ENCODE measurements at regions of chr11 and their contacts with region 1.

Region 1: DNA sequence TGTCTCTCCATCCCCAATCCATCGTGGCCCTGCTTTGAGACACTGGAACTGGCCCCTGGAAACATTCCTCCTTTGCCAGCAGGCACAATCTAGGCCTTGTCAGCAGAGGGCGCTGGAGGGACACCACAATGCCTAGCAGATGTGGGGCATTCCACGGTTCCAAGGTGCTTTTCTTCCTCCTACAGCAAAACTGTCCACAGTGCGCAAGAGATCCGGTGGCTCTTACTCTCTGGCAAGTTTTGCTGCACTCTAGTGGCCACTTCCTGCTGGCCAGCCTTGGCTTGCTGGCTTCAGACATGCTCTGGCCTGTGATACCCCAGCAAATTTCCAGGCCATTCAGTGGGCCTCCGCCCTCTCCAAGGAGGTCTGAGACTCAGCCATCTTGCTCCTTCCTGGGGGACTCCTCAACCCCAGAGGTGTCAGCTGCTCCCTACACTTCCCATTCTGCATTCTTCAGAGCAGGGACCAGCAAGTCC is 17.1 kb upstream of the RBM4B start:
- DNase-seq: peak; percentile 76 to 86 (median 79)
- H3K4me3 ChIP-seq: no peak overlapping the region
- H3K4me3 Mint-ChIP-seq: no peak overlapping the region
- H3K27ac ChIP-seq: no peak overlapping the region
- H3K27ac Mint-ChIP-seq: no peak overlapping the region
- H3K4me1 ChIP-seq: no peaks in the 10 kb centered on the region
- H3K4me1 Mint-ChIP-seq: no peaks in the 10 kb centered on the region
- H3K27me3 ChIP-seq: no peaks in the 10 kb centered on the region
- H3K27me3 Mint-ChIP-seq: peaks cover 2% of the 10 kb centered on the region in 2 donors

Region 2: DNA sequence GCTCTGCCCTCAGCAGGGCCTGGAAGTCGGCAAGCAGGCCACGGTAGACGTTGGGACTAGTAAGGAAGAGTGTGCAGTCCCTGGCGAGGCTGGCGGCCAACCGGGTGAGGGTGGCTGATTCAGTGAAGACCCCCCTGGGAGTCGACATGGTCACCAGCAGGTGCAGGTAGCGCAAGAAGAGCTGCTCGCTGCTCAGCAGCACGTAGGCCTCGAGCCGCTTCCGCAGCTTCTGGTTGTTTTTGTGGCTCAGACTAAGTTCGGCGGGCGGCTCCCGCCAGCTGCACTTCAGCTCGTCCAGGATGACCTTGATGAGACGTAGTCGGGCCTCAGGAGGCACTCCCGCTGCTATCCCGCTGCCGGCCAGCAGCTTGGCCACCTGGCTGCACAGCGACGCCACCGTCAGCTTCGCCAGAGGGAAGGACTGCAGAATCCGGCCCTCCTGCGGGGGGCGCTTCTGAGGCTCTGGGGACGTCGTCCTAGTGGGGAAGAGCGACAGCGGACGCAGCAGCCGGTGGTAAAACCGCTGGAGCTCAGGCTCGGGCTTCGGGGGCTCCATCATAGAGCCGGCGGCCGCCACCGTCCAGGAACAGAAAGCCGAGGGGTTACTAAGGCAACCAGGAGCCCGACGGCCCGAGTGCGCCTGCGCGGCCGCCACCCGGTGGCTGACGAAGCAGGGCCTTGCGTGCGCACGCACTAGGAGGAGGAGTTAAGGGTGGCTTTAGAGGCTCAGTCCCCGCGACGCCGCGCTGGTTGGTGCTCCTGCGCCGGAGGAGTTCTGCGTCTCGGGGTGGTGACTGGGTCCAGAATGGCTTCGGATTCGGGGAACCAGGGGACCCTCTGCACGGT is 102.1 kb before region 1 on chr11 and contains the starts of genes CCDC87 and CCS:
- CTCF ChIA-PET with region 1: no interaction called
- POLR2A ChIA-PET with region 1: no interaction called
- intact Hi-C with region 1: no loop called
- DNase-seq: peak; percentile 95 to 98 (median 97)
- H3K4me3 ChIP-seq: peak within 1 kb of the TSS; percentile 71 to 98
- H3K4me3 Mint-ChIP-seq: peak within 1 kb of the TSS; percentile 98 to 100 (median 99)
- H3K27ac ChIP-seq: peak within 1 kb of the TSS; percentile 88
- H3K27ac Mint-ChIP-seq: peak within 1 kb of the TSS; percentile 96 to 100 (median 100)
- H3K4me1 ChIP-seq: peaks cover 35% of the 10 kb centered on the region
- H3K4me1 Mint-ChIP-seq: peaks cover 16 to 42% (median 27%) of the 10 kb centered on the region in 4 donors
- H3K27me3 ChIP-seq: no peaks in the 10 kb centered on the region
- H3K27me3 Mint-ChIP-seq: no peaks in the 10 kb centered on the region
- total RNA-seq, gene CCDC87: not detected
- total RNA-seq, gene CCS: 61.0 to 61.5 TPM

Region 3: GRCh38 chr11:66727282-66727882 is 32.6 kb after region 1 on chr11:
- CTCF ChIA-PET with region 1: interaction called, 12 read pairs
- POLR2A ChIA-PET with region 1: no interaction called
- intact Hi-C with region 1: no loop called
- DNase-seq: peak; percentile 19 to 49 (median 27)
- H3K4me3 ChIP-seq: peak overlapping the region in 1 of 2 donors; percentile 29
- H3K4me3 Mint-ChIP-seq: peak overlapping the region; percentile 63 to 84 (median 72)
- H3K27ac ChIP-seq: no peak overlapping the region
- H3K27ac Mint-ChIP-seq: no peak overlapping the region
- H3K4me1 ChIP-seq: peaks cover 10% of the 10 kb centered on the region
- H3K4me1 Mint-ChIP-seq: peaks cover 5 to 20% (median 12%) of the 10 kb centered on the region in 4 donors
- H3K27me3 ChIP-seq: peaks cover 23% of the 10 kb centered on the region
- H3K27me3 Mint-ChIP-seq: peaks cover 45 to 57% of the 10 kb centered on the region in 2 donors

Region 4: DNA sequence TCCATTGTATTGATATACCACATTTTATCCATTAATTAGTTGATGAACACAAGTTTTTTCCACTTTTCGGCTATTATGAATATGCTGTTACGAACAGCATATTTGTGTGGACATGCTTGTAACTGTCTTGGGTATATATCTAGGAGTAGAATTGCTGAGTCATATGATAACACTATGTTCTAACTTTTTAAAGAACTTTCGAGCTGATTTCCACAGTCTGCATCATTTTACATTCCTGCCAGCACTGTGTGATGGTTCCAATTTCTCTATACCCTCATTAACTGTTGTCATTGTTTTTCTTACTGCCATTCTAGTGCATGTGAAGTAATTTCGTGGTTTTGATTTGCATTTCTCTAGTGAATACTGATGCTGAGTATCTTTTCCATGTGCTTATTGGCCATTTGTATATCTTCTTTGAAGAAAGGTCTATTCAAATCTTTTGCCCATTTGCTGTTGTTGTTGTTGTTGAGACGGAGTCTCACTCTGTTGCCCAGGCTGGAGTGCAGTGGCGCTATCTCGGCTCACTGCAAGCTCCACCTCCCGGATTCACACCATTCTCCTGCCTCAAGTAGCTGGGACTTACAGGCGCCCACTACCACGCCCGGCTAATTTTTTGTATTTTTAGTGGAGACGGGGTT is 141.1 kb after region 1 on chr11:
- CTCF ChIA-PET with region 1: interaction called, 59 read pairs
- POLR2A ChIA-PET with region 1: interaction called, 3 read pairs
- intact Hi-C with region 1: loop called (anchors 1 kb)
- DNase-seq: no peak
- H3K4me3 ChIP-seq: no peak overlapping the region
- H3K4me3 Mint-ChIP-seq: no peak overlapping the region
- H3K27ac ChIP-seq: no peak overlapping the region
- H3K27ac Mint-ChIP-seq: peak overlapping the region in 4 of 7 donors; percentile 21 to 73 (median 38)
- H3K4me1 ChIP-seq: peaks cover 21% of the 10 kb centered on the region
- H3K4me1 Mint-ChIP-seq: peaks cover 18 to 32% (median 27%) of the 10 kb centered on the region in 4 donors
- H3K27me3 ChIP-seq: no peaks in the 10 kb centered on the region
- H3K27me3 Mint-ChIP-seq: no peaks in the 10 kb centered on the region

Region 5: GRCh38 chr11:66883016-66883968 is 188.5 kb after region 1 on chr11:
- CTCF ChIA-PET with region 1: interaction called, 23 read pairs
- POLR2A ChIA-PET with region 1: no interaction called
- intact Hi-C with region 1: loop called (anchors 1 kb)
- DNase-seq: peak in 4 of 5 donors; percentile 36 to 42 (median 37)
- H3K4me3 ChIP-seq: no peak overlapping the region
- H3K4me3 Mint-ChIP-seq: peak overlapping the region in 1 of 8 donors; percentile 26
- H3K27ac ChIP-seq: no peak overlapping the region
- H3K27ac Mint-ChIP-seq: peak overlapping the region in 1 of 7 donors; percentile 8
- H3K4me1 ChIP-seq: peaks cover 14% of the 10 kb centered on the region
- H3K4me1 Mint-ChIP-seq: peaks cover 10 to 25% (median 13%) of the 10 kb centered on the region in 4 donors
- H3K27me3 ChIP-seq: no peaks in the 10 kb centered on the region
- H3K27me3 Mint-ChIP-seq: no peaks in the 10 kb centered on the region

Region 6: DNA sequence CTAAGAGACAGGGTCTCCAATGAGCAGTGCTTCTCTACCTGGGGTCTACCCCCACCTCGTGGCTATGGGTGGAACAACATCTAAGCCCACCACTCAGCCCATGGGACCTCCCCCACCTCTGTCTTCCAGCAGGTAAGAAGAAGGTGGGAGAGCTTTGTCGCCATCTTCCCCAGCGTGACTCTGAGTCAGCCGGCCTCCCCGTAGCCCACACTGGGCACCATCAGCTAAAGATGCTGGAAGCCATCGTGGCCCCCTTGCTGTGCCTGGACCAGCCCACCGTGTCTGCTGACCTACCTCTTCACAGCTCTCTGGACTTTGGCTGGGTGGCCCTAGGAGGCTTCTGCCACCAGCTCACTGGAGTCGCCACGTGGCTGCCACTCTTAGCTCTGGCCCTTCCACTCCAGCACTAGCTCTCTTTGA is 281.3 kb after region 1 on chr11:
- CTCF ChIA-PET with region 1: no interaction called
- POLR2A ChIA-PET with region 1: no interaction called
- intact Hi-C with region 1: loop called (anchors 10 kb)
- DNase-seq: peak in 1 of 5 donors; percentile 3
- H3K4me3 ChIP-seq: no peak overlapping the region
- H3K4me3 Mint-ChIP-seq: no peak overlapping the region
- H3K27ac ChIP-seq: no peak overlapping the region
- H3K27ac Mint-ChIP-seq: no peak overlapping the region
- H3K4me1 ChIP-seq: no peaks in the 10 kb centered on the region
- H3K4me1 Mint-ChIP-seq: no peaks in the 10 kb centered on the region
- H3K27me3 ChIP-seq: no peaks in the 10 kb centered on the region
- H3K27me3 Mint-ChIP-seq: peaks cover 6 to 7% of the 10 kb centered on the region in 2 donors